Esophagus muscularis mucosa (tissue), 4 donors: ENCODE measurements at regions of chr1 and their contacts with region 1.

Region 1: GRCh38 chr1:116139592-116140134 is 28.5 kb downstream of the MAB21L3 start:
- DNase-seq: peak; percentile 74
- H3K4me3 ChIP-seq: no peak overlapping the region
- H3K27ac ChIP-seq: no peak overlapping the region
- H3K4me1 ChIP-seq: peaks cover 0 to 6% (median 0%) of the 10 kb centered on the region in 4 donors
- H3K27me3 ChIP-seq: no peaks in the 10 kb centered on the region
- CTCF ChIP-seq: no peak
- EP300 ChIP-seq: no peak
- POLR2A ChIP-seq: no peak

Region 2: DNA sequence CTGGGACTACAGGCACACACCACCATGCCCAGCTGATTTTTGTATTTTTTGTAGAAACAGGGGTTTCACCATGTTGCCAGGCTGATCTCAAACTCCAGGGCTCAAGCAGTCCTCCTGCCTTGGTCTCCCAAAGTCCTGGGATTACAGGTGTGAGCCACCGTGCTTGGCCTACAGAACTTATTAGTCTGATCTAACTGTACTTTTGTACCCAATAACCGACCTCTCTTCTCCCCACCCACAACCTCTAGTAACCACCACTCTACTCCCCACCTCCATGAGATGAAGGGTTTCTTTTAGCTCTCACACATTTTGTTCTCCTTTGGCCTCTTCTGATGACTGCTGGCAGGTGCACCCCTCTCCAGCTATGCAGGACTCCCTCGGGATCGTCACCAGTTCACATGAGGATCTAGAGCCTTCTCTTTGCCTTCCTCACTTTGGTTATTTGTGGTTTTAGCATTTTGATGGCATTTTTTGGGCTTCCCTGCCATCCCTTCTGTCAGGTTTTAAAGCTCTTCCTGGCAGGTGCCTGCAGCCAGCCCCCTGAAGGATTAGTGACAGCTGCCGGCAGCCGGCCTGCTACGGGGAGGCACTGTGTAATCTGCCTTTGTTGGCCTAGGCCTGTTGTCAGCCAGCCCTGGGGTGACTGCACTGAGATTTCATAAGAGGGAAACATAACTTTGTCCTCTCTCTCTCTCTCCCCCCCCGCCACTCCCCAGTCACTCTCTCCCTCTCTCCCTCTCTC is 133.6 kb after region 1 on chr1:
- intact Hi-C with region 1: no loop called
- DNase-seq: no peak
- H3K4me3 ChIP-seq: no peak overlapping the region
- H3K27ac ChIP-seq: no peak overlapping the region
- H3K4me1 ChIP-seq: peaks cover 0 to 2% (median 0%) of the 10 kb centered on the region in 4 donors
- H3K27me3 ChIP-seq: peaks cover 0 to 3% (median 0%) of the 10 kb centered on the region in 4 donors
- CTCF ChIP-seq: no peak
- EP300 ChIP-seq: no peak
- POLR2A ChIP-seq: no peak

Region 3: GRCh38 chr1:116485071-116485735 is 345.5 kb after region 1 on chr1:
- intact Hi-C with region 1: loop called (anchors 2 kb)
- DNase-seq: peak; percentile 94
- H3K4me3 ChIP-seq: no peak overlapping the region
- H3K27ac ChIP-seq: no peak overlapping the region
- H3K4me1 ChIP-seq: peaks cover 5 to 25% (median 8%) of the 10 kb centered on the region in 4 donors
- H3K27me3 ChIP-seq: peaks cover 0 to 4% (median 0%) of the 10 kb centered on the region in 4 donors
- CTCF ChIP-seq: peak; percentile 83 to 93 (median 84)
- EP300 ChIP-seq: no peak
- POLR2A ChIP-seq: no peak